ENCODE measurements at regions of chr9 and their contacts with region 1.

Region 1: GRCh38 chr9:116737152-116737546 is 50.0 kb downstream of the TRIM32 start:
- DNase-seq: peak; percentile 29
- H3K4me3 ChIP-seq: peak overlapping the region; percentile 9
- CTCF ChIP-seq: peak; percentile 98

Region 2: GRCh38 chr9:116724123-116724522 is 13.0 kb before region 1 on chr9:
- CTCF ChIA-PET with region 1: interaction called, 58 read pairs
- POLR2A ChIA-PET with region 1: no interaction called
- DNase-seq: no peak
- H3K4me3 ChIP-seq: no peak overlapping the region
- CTCF ChIP-seq: no peak

Region 3: DNA sequence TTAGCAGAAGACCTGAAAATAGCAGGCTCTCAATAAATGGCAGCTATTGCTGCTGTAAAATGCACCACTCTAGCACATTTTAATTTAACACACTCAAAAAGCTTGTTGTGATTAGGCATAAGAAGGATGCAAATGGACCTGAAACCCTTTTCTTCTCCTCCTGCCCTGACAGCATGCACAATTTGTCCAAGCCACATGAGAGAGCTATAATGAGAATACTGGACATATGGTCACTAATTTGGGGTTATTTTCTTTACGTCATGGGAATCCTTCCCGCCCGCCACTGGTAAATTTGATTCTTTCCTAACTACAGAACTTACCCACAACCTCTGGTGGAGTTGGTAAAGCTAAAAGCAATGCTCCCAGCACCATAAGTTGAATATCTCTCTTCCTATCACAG is 12.0 kb after region 1 on chr9:
- CTCF ChIA-PET with region 1: interaction called, 37 read pairs
- POLR2A ChIA-PET with region 1: no interaction called
- DNase-seq: no peak
- H3K4me3 ChIP-seq: no peak overlapping the region
- CTCF ChIP-seq: no peak

Region 4: GRCh38 chr9:117411548-117411947 is 674.4 kb after region 1 on chr9:
- CTCF ChIA-PET with region 1: interaction called, 17 read pairs
- POLR2A ChIA-PET with region 1: no interaction called
- DNase-seq: no peak
- H3K4me3 ChIP-seq: no peak overlapping the region
- CTCF ChIP-seq: peak; percentile 65

Region 5: DNA sequence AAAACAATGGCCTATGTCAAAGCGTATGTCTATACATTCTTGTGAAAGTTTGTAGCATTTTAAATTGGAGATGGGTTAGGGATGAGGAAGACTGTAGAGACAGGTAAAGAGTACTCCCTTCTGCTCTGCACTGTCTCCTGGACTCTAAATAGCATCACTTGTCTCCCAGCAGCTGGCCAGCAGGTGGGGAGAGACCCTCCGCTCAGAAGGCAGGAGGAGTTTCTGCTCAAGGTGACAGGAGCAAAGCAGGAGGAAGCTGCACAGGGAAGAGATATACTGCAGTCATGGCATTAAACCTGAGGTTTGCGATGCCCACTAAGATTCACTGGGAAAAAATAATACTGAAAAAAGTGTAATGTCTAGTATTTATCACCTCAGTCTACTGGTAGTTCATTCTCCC is 688.4 kb after region 1 on chr9:
- CTCF ChIA-PET with region 1: no interaction called
- POLR2A ChIA-PET with region 1: no interaction called
- DNase-seq: no peak
- H3K4me3 ChIP-seq: no peak overlapping the region
- CTCF ChIP-seq: no peak